Activated T-helper 1 cell treated with anti-CD3 and anti-CD28 coated beads, Interleukin-12 subunit alpha, Interleukin-12 subunit beta, Interleukin-2, Interleukin-4 antibody, amounts not matched to agents 30 ng/mL and 10 ng/mL and 1 ng/mL, durations not matched to agents 14 hours and 24 hours and 36 hours (primary cell): ENCODE measurements at regions of chr14 and their contacts with region 1.

Region 1: GRCh38 chr14:20332788-20333493 is at the start of gene CCNB1IP1:
- DNase-seq: peak; percentile 62
- H3K4me3 Mint-ChIP-seq: peak within 1 kb of the TSS; percentile 98
- H3K27ac Mint-ChIP-seq: peak within 1 kb of the TSS; percentile 91
- H3K4me1 Mint-ChIP-seq: peaks cover 59% of the 10 kb centered on the region
- H3K27me3 Mint-ChIP-seq: peaks cover 5% of the 10 kb centered on the region
- total RNA-seq, gene CCNB1IP1: 61.2 and 72.5 TPM in 2 replicates

Region 2: GRCh38 chr14:20197459-20197858 is 135.5 kb before region 1 on chr14:
- intact Hi-C with region 1: no loop called
- DNase-seq: no peak
- H3K4me3 Mint-ChIP-seq: no peak overlapping the region
- H3K27ac Mint-ChIP-seq: no peak overlapping the region
- H3K4me1 Mint-ChIP-seq: no peaks in the 10 kb centered on the region
- H3K27me3 Mint-ChIP-seq: peaks cover 4% of the 10 kb centered on the region

Region 3: DNA sequence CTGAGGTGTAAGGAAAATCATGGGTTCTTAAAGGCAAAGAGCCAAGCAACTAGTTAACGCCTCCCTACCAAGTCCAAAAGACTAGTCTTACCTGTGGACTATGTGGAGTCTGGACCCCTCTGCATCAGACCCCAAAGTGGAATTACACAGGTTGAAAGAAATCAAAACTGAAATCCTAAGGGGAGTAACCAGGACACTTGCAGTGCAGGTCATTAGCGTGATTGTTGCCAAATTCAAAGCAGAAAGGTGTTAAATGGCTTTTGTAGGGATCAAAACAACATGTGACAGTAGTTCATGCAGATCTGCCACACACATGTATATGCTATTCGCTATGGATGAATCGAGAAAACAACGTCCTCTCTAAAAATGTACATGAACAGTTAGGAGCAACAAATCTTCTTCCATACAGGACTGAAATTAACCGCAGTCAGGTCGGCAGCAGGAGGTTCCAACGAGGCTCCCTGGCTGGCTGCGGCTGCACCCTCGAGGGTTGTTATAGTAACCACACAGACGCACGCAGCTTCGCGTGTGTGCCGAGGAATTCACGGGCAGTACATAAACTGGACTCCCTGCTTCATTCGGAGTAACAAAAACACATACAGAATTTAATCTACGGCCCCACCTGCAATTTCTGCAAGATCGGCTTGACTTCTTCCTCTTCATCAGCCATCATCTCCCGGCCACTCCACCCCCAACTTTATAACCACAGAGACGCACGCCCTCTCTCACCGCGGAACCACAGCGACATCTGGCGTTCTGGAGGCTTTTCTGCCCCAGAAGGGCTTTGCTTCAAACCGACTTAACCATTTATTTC is 27.5 kb before region 1 on chr14 and contains the start of gene TTC5:
- intact Hi-C with region 1: loop called (anchors 1 kb)
- DNase-seq: peak; percentile 85
- H3K4me3 Mint-ChIP-seq: peak within 1 kb of the TSS; percentile 96
- H3K27ac Mint-ChIP-seq: peak within 1 kb of the TSS; percentile 94
- H3K4me1 Mint-ChIP-seq: peaks cover 25% of the 10 kb centered on the region
- H3K27me3 Mint-ChIP-seq: no peaks in the 10 kb centered on the region
- total RNA-seq, gene TTC5: 33.0 and 33.7 TPM in 2 replicates

Region 4: GRCh38 chr14:20461274-20462001 is 128.5 kb after region 1 on chr14 and contains the start of gene PIP4P1:
- intact Hi-C with region 1: loop called (anchors 1 kb)
- DNase-seq: peak; percentile 99
- H3K4me3 Mint-ChIP-seq: peak within 1 kb of the TSS; percentile 94
- H3K27ac Mint-ChIP-seq: peak within 1 kb of the TSS; percentile 87
- H3K4me1 Mint-ChIP-seq: peaks cover 23% of the 10 kb centered on the region
- H3K27me3 Mint-ChIP-seq: no peaks in the 10 kb centered on the region
- total RNA-seq, gene PIP4P1: 36.6 and 37.0 TPM in 2 replicates